ENCODE measurements at regions of chr7 and their contacts with region 1.

Region 1: DNA sequence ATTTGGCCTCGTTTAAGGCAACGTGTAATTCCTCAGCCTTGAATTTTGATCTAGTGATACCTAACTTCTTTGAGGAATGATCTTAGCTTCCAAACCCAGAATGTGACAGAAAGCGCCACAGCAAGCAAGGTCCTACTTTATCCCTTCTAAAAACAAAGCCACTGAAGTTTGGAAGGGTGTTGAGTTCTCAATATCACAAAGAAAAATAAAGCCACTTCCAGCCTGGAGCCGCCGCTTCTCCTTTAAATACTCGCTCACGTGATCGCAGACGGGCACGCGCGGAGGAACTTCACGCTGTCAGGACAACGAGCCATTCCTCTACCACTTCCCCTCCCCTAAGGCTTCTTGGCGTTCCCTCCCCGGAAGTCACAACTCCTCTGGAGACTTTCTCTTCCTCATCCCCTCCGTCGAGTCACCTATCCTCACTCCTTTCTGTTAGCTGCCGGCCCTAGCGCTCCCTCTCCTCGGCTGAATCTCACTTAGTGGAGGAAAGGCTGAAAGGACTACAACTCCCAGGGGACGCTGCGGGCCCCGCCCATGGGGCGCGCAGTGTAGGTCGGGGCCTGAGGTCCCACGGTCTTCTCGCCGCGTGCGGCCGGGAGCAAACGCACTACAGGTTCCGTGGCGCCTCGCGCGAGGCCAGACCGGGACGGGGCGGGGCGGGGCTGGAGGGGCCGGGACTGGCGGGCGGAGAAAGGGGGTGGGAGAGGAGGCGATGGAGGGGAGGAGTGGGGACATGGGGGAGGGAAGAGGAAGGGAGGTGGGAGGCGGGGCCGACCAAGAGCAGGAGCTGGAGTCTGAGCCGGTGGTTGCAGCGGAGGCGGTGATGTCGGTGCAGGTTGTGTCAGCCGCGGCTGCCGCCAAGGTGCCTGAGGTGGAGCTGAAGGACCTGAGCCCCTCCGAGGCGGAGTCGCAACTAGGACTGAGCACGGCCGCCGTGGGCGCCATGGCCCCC is at the start of gene AHCYL2:
- DNase-seq: peak; percentile 99
- H3K4me3 Mint-ChIP-seq: peak within 1 kb of the TSS; percentile 87
- H3K27ac Mint-ChIP-seq: peak within 1 kb of the TSS; percentile 91
- H3K4me1 Mint-ChIP-seq: peaks cover 27% of the 10 kb centered on the region
- H3K27me3 Mint-ChIP-seq: no peaks in the 10 kb centered on the region
- total RNA-seq, gene AHCYL2: 16.4 to 17.1 TPM

Region 2: DNA sequence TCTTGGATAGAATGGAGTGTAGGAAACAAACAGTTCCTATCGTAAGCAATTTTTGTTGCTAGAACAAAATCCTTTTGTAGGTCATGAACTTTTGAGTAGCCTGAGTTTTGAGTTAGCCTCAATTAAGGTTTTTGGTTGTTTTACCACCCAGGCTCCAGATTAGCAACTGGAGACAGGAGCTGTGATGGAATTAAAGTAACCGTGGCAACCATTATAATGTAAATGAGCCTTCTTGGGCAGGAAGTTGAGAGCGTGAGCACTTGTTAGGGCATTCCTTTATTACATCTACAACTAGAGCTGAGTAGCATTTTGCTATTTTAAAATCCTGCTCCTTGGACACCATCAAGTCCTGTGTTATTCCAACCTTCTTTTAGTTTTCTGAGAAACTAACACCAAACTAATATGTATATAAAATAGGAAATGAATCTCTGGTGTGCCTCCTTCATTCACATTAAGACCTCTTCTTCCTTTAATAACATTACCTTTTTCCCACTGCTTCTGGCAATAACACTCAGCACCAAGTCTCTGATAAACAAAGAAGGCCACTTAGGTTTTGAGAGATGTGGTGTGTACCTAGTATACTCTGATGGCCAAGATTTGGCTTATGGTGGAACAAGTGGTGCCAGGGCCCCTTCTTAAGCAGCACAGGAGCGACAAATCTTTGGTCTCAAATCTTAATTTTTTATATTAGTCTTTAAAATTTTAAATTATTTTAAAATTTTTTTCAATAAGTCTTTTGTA is 34.3 kb after region 1 on chr7:
- CTCF ChIA-PET with region 1: interaction called, 34 read pairs
- POLR2A ChIA-PET with region 1: no interaction called
- intact Hi-C with region 1: loop called (anchors 1 kb)
- DNase-seq: no peak
- H3K4me3 Mint-ChIP-seq: no peak overlapping the region
- H3K27ac Mint-ChIP-seq: no peak overlapping the region
- H3K4me1 Mint-ChIP-seq: peaks cover 26% of the 10 kb centered on the region
- H3K27me3 Mint-ChIP-seq: no peaks in the 10 kb centered on the region

Region 3: DNA sequence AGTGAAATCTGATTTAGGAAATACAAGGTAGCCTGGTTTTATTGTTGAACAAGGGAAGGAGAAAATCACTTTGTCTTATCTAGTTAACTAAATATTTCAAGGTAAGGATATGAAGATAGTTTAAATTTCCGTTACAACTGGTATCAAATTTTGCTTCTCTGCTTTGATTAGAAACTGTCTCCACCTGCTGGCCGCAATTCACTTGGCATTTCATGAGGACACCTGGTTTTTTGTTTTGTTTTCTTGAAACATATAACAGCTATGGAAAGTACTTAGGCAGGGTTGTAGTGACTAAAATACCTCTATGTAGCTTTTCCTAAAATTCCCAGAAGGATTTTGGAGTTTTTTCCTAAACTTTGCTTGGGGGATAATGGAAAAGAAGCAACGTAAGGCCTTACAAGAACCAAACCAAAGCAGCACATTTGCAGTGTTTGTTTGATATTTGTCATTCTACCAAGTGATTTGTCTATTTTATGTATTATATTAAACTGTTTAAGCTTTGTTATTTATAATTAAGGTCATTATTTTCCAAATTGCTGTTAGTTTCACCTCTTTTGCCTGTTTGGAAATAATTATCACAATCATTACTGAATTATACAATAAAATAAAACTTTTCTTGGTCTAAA is 73.9 kb after region 1 on chr7:
- CTCF ChIA-PET with region 1: interaction called, 88 read pairs
- POLR2A ChIA-PET with region 1: no interaction called
- intact Hi-C with region 1: no loop called
- DNase-seq: peak; percentile 62
- H3K4me3 Mint-ChIP-seq: no peak overlapping the region
- H3K27ac Mint-ChIP-seq: no peak overlapping the region
- H3K4me1 Mint-ChIP-seq: peaks cover 2% of the 10 kb centered on the region
- H3K27me3 Mint-ChIP-seq: no peaks in the 10 kb centered on the region

Region 4: GRCh38 chr7:129468087-129468486 is 243.6 kb after region 1 on chr7:
- CTCF ChIA-PET with region 1: no interaction called
- POLR2A ChIA-PET with region 1: no interaction called
- intact Hi-C with region 1: loop called (anchors 10 kb)
- DNase-seq: no peak
- H3K4me3 Mint-ChIP-seq: no peak overlapping the region
- H3K27ac Mint-ChIP-seq: no peak overlapping the region
- H3K4me1 Mint-ChIP-seq: peaks cover 13% of the 10 kb centered on the region
- H3K27me3 Mint-ChIP-seq: no peaks in the 10 kb centered on the region

Measured in activated CD4-positive, alpha-beta memory T cell treated with anti-CD3 and anti-CD28 coated beads for 36 hours (primary cell).